GM13977 (cell line): ENCODE measurements at regions of chr1 and their contacts with region 1.

Region 1: DNA sequence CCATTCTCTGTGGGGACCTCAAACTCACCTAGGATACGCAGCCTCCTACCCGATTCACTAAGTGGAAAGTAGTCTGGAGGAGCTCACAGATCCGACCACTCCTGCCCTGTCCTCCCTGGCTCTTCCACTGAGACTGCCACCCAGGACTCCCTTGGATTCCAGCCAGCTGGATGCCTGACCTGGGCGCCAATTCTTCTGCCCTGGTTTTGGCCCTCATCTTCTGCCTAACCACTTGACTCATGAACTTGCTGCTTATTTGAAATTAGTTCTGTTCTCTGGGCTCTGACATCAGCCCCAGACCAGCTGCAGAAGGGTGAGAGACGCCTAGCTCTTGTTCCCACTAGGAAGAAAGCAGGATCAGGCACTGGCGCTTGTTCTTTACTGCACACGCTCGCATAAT is 48.9 kb downstream of the SLC35D1 start:
- DNase-seq: no peak
- CTCF ChIP-seq: no peak

Region 2: GRCh38 chr1:67149179-67149770 is 144.2 kb after region 1 on chr1:
- in situ Hi-C with region 1: loop called (anchors 5 kb)
- DNase-seq: peak; percentile 68
- CTCF ChIP-seq: peak; percentile 71

Region 3: GRCh38 chr1:67414574-67414973 is 409.5 kb after region 1 on chr1:
- in situ Hi-C with region 1: no loop called
- DNase-seq: no peak
- CTCF ChIP-seq: no peak